Mammary epithelial cell (primary cell): ENCODE measurements at regions of chr5 and their contacts with region 1.

Region 1: DNA sequence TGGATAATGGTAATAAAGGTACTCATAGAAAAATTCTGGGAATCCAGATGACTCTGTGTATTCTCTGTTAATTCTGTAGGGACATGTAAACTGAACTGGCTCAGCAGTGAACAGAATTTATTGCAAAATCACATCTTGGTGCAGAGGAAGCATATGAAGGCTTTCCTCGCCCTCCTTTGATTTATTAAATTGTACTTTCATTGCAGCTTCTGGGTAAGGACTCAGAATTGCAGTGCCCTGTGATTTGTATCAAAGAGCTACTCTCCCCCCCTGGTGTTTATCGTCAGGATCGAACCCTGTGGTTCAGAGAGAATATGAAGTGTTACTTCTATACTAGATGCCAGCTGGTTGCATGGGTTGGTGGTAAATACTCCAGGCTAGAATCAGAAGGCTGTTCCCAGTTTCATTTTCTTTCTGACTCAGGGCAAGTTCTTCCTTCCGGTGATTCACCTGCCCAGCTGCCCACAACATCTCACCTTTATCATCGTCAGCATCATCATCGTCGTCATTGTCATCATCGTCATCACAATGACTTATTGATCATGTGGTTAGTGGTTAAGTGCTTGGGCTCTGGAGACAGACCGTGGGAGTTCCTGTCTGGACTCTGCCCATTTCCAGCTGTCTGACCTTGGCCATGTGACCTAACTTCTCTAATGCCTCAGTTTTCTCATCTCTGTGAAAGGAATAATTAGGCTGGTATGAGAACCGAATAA is 238.8 kb downstream of the ARHGAP26 start:
- DNase-seq: peak; percentile 100
- H3K4me3 ChIP-seq: no peak overlapping the region
- H3K27ac ChIP-seq: peak overlapping the region; percentile 91
- H3K4me1 ChIP-seq: peaks cover 25% of the 10 kb centered on the region
- H3K27me3 ChIP-seq: no peaks in the 10 kb centered on the region
- CTCF ChIP-seq: peak in 1 of 2 donors; percentile 6

Region 2: DNA sequence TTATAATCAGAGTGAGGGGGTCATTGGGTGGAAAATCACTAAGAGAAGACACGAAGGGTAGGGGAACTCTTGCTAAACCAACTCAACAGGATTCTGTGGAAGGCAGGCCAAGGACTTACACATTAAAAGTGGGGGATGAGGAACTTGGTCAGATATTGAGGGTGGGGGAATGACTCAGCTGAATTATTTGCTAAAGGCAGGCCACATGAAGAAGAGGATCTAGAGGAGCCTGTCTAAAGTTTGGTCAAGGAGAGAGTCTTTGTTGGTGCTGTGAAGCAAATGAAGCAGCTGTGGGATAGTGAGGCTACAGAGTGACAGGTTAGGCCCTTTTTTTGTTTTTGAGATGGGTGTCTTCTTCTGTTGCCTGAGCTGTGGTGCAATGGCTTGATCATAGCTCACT is 620.3 kb before region 1 on chr5:
- CTCF ChIA-PET with region 1: no interaction called
- dilution Hi-C with region 1: no loop called
- in situ Hi-C with region 1: no loop called
- intact Hi-C with region 1: no loop called
- DNase-seq: no peak
- H3K4me3 ChIP-seq: no peak overlapping the region
- H3K27ac ChIP-seq: no peak overlapping the region
- H3K4me1 ChIP-seq: no peaks in the 10 kb centered on the region
- H3K27me3 ChIP-seq: no peaks in the 10 kb centered on the region
- CTCF ChIP-seq: no peak

Region 3: GRCh38 chr5:142627383-142628255 is 381.3 kb before region 1 on chr5:
- CTCF ChIA-PET with region 1: no interaction called
- dilution Hi-C with region 1: no loop called
- in situ Hi-C with region 1: no loop called
- intact Hi-C with region 1: no loop called
- DNase-seq: peak; percentile 40
- H3K4me3 ChIP-seq: no peak overlapping the region
- H3K27ac ChIP-seq: no peak overlapping the region
- H3K4me1 ChIP-seq: peaks cover under 1% of the 10 kb centered on the region
- H3K27me3 ChIP-seq: no peaks in the 10 kb centered on the region
- CTCF ChIP-seq: no peak

Region 4: GRCh38 chr5:143061161-143061945 is 52.4 kb after region 1 on chr5:
- CTCF ChIA-PET with region 1: no interaction called
- dilution Hi-C with region 1: no loop called
- in situ Hi-C with region 1: no loop called
- intact Hi-C with region 1: loop called (anchors 2 kb)
- DNase-seq: peak; percentile 76
- H3K4me3 ChIP-seq: peak overlapping the region in 1 of 3 experiments; percentile 14
- H3K27ac ChIP-seq: peak overlapping the region; percentile 95
- H3K4me1 ChIP-seq: peaks cover 58% of the 10 kb centered on the region
- H3K27me3 ChIP-seq: no peaks in the 10 kb centered on the region
- CTCF ChIP-seq: no peak

Region 5: GRCh38 chr5:143086908-143087637 is 78.1 kb after region 1 on chr5:
- CTCF ChIA-PET with region 1: no interaction called
- dilution Hi-C with region 1: no loop called
- in situ Hi-C with region 1: no loop called
- intact Hi-C with region 1: loop called (anchors 5 kb)
- DNase-seq: peak; percentile 78
- H3K4me3 ChIP-seq: no peak overlapping the region
- H3K27ac ChIP-seq: peak overlapping the region; percentile 36
- H3K4me1 ChIP-seq: peaks cover 20% of the 10 kb centered on the region
- H3K27me3 ChIP-seq: no peaks in the 10 kb centered on the region
- CTCF ChIP-seq: no peak

Region 6: GRCh38 chr5:143395638-143396352 is 386.8 kb after region 1 on chr5:
- CTCF ChIA-PET with region 1: no interaction called
- dilution Hi-C with region 1: loop called (anchors 5 kb)
- in situ Hi-C with region 1: loop called in 1 of 2 experiments (anchors 10 kb)
- intact Hi-C with region 1: loop called (anchors 2 kb)
- DNase-seq: peak; percentile 58
- H3K4me3 ChIP-seq: peak overlapping the region; percentile 72 to 83 (median 78)
- H3K27ac ChIP-seq: peak overlapping the region; percentile 97
- H3K4me1 ChIP-seq: peaks cover 14% of the 10 kb centered on the region
- H3K27me3 ChIP-seq: no peaks in the 10 kb centered on the region
- CTCF ChIP-seq: no peak